Activated B cell treated with CpG ODN at 0.5 μM for 24 hours (primary cell): ENCODE measurements at regions of chr2 and their contacts with region 1.

Region 1: GRCh38 chr2:39094852-39095306 is 26.0 kb downstream of the SOS1 start:
- DNase-seq: no peak
- ATAC-seq: peak; percentile 25
- H3K4me3 Mint-ChIP-seq: no peak overlapping the region
- H3K27ac Mint-ChIP-seq: peak overlapping the region; percentile 57
- H3K4me1 Mint-ChIP-seq: peaks cover 64% of the 10 kb centered on the region
- H3K27me3 Mint-ChIP-seq: no peaks in the 10 kb centered on the region
- CTCF ChIP-seq: no peak

Region 2: GRCh38 chr2:39080152-39080551 is 14.7 kb before region 1 on chr2:
- CTCF ChIA-PET with region 1: no interaction called
- POLR2A ChIA-PET with region 1: no interaction called
- intact Hi-C with region 1: loop called (anchors 2 kb)
- DNase-seq: no peak
- ATAC-seq: no peak
- H3K4me3 Mint-ChIP-seq: no peak overlapping the region
- H3K27ac Mint-ChIP-seq: no peak overlapping the region
- H3K4me1 Mint-ChIP-seq: peaks cover 29% of the 10 kb centered on the region
- H3K27me3 Mint-ChIP-seq: no peaks in the 10 kb centered on the region
- CTCF ChIP-seq: no peak